Mammary epithelial cell (primary cell): ENCODE measurements at regions of chr17 and their contacts with region 1.

Region 1: GRCh38 chr17:27569257-27569722 is 61.7 kb upstream of the LGALS9 start:
- DNase-seq: no peak
- H3K4me3 ChIP-seq: no peak overlapping the region
- H3K27ac ChIP-seq: no peak overlapping the region
- H3K4me1 ChIP-seq: no peaks in the 10 kb centered on the region
- H3K27me3 ChIP-seq: no peaks in the 10 kb centered on the region
- CTCF ChIP-seq: peak; percentile 30 to 59

Region 2: DNA sequence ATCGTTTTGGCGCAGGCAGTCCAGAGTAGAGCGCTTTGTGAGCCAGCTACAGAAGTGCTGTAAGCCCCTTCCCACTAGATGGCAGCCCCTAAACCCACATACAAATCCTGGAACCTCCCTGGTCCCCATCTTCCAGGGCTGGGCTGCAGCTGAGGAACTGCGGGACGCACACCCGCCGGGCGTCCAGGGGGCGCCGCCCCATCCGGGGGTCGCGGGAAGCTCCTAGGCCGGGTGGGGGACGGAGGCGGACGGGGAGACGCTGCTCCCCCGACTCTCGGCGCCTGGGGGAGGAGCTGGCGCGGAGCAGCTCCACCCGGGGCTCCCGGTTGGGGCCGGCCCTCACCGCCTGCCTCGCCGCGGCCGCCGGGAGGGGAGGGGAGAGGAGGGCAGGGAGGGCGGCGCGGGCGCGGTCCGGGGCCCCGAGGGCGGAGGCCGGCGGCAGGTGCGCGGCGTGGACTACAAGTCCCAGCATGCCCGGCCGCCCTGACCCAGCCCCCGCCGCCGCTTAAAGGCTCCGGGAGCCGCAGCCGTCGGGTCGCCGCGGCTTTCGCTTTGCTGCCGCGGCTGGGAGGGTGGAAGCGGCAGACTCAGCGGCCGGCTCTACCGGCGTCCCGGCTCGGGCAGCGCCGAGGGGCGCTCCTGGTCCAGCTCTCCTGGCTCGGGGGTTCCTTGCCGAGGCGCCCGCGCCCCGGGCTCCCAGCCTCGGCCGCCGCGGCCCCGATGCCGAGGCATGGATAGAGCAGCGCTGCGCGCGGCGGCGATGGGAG is 113.2 kb before region 1 on chr17 and contains the start of gene KSR1:
- CTCF ChIA-PET with region 1: no interaction called
- dilution Hi-C with region 1: no loop called
- in situ Hi-C with region 1: no loop called
- intact Hi-C with region 1: loop called (anchors 10 kb)
- DNase-seq: peak; percentile 47
- H3K4me3 ChIP-seq: peak within 1 kb of the TSS; percentile 49 to 62 (median 52)
- H3K27ac ChIP-seq: no peak within 1 kb of the TSS
- H3K4me1 ChIP-seq: peaks cover 11% of the 10 kb centered on the region
- H3K27me3 ChIP-seq: peaks cover 9% of the 10 kb centered on the region
- CTCF ChIP-seq: peak in 1 of 2 donors; percentile 29
- total RNA-seq, gene KSR1: 1.6 to 1.7 TPM

Region 3: DNA sequence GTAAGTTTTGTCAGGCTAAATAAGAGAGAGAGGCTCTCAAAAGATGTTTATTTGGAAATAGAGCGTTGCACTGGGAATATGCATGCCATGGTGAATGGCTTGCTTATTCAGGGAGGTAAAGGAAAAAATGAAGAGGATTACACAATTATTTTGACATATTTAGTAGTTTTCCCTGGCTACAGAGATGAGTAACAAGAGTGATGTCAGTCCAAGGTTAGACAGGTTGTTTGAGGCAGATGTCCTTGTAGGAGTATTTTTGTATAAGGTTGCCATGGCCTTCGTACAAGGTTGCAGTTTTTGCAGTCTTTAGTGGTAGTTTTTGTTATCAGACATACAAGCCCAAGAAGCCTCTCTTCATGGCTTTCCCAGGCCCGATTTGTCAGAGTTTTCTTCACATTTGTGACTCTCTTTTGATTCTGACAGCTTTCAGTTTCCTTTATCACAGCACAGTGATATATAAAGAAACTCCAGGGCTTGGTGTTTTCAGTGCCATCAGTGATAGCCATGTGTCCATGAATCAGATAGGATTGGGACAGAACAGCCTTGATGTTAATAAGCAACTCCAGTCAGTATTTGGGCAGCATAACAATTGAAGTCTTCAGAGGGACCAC is 43.0 kb after region 1 on chr17:
- CTCF ChIA-PET with region 1: no interaction called
- dilution Hi-C with region 1: no loop called
- in situ Hi-C with region 1: no loop called
- intact Hi-C with region 1: no loop called
- DNase-seq: no peak
- H3K4me3 ChIP-seq: no peak overlapping the region
- H3K27ac ChIP-seq: no peak overlapping the region
- H3K4me1 ChIP-seq: no peaks in the 10 kb centered on the region
- H3K27me3 ChIP-seq: no peaks in the 10 kb centered on the region
- CTCF ChIP-seq: no peak